ENCODE measurements at regions of chrX and their contacts with region 1.

Region 1: GRCh38 chrX:115330498-115331168 is 41.1 kb downstream of the LUZP4 start:
- DNase-seq: no peak
- H3K4me3 ChIP-seq: peak overlapping the region; percentile 19 to 39
- H3K27ac ChIP-seq: peak overlapping the region; percentile 56 to 62
- H3K4me1 ChIP-seq: no peaks in the 10 kb centered on the region
- H3K27me3 ChIP-seq: no peaks in the 10 kb centered on the region
- CTCF ChIP-seq: peak; percentile 68 to 85 (median 79)

Region 2: DNA sequence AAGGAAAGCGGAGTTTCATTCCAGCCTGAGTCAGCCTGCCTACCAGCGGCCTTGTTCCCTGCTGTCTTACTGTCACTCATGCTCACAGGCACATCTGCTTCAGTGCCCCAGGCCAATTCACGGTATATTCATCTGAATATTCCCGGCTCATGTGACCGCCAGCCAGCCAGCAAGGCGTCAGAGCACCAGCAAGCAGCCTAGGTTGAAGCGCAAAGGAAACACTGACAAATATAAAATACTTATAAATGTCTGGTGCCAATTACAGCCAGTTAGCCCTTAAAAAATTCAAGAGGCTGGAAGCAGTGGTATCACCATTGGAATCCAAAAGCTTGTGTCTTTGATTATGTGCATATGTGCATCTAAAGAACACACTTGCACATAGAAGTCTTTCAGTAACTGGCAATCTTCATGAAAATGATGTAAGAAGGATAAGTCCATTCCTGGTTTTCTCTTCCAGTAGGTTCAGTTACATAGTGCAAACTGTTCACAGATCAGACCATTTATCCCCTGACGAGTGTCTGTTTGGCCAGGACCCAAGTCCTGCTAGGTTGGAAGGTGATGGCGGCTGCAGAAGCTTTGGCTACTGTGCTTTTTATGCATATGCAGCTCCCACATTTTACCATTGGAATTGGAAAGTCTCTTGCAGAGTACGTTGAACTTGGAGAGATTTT is 20.2 kb after region 1 on chrX:
- intact Hi-C with region 1: no loop called
- DNase-seq: no peak
- H3K4me3 ChIP-seq: no peak overlapping the region
- H3K27ac ChIP-seq: peak overlapping the region; percentile 4 to 41
- H3K4me1 ChIP-seq: peaks cover 0 to 3% of the 10 kb centered on the region in 2 donors
- H3K27me3 ChIP-seq: no peaks in the 10 kb centered on the region
- CTCF ChIP-seq: no peak

Region 3: DNA sequence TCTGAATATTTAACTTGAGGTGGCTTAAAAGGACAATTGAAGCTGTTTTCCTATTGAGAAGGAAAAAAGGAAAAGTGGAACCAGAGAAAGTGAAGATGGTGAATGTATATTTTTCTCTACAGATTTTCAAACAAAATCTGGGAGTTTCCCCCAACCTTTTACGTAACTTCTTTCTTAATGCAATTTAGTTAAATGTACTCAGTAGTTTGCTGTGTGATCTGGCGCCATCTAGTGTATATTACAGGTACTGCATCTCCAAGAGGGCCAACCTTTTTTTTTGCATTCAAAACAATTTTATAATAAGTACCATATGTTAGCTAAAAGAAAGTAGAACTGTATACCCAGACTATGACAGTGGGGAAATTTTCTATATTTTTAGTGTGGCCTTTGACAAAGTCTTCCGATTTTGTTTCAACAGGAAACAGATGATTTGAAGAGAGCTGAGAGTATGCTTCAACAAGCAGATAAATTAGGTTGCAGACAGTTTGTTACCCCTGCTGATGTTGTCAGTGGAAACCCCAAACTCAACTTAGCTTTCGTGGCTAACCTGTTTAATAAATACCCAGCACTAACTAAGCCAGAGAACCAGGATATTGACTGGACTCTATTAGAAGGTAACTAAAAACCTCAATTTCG is 312.4 kb after region 1 on chrX:
- intact Hi-C with region 1: loop called (anchors 2 kb)
- DNase-seq: no peak
- H3K4me3 ChIP-seq: no peak overlapping the region
- H3K27ac ChIP-seq: peak overlapping the region in 1 of 2 donors; percentile 35
- H3K4me1 ChIP-seq: peaks cover 0 to 6% of the 10 kb centered on the region in 2 donors
- H3K27me3 ChIP-seq: no peaks in the 10 kb centered on the region
- CTCF ChIP-seq: peak; percentile 84 to 98 (median 98)

Region 4: GRCh38 chrX:115679460-115679859 is 348.8 kb after region 1 on chrX:
- intact Hi-C with region 1: loop called (anchors 1 kb)
- DNase-seq: no peak
- H3K4me3 ChIP-seq: peak overlapping the region in 1 of 2 donors; percentile 17
- H3K27ac ChIP-seq: peak overlapping the region in 1 of 2 donors; percentile 41
- H3K4me1 ChIP-seq: no peaks in the 10 kb centered on the region
- H3K27me3 ChIP-seq: no peaks in the 10 kb centered on the region
- CTCF ChIP-seq: peak; percentile 19 to 56 (median 28)

Region 5: DNA sequence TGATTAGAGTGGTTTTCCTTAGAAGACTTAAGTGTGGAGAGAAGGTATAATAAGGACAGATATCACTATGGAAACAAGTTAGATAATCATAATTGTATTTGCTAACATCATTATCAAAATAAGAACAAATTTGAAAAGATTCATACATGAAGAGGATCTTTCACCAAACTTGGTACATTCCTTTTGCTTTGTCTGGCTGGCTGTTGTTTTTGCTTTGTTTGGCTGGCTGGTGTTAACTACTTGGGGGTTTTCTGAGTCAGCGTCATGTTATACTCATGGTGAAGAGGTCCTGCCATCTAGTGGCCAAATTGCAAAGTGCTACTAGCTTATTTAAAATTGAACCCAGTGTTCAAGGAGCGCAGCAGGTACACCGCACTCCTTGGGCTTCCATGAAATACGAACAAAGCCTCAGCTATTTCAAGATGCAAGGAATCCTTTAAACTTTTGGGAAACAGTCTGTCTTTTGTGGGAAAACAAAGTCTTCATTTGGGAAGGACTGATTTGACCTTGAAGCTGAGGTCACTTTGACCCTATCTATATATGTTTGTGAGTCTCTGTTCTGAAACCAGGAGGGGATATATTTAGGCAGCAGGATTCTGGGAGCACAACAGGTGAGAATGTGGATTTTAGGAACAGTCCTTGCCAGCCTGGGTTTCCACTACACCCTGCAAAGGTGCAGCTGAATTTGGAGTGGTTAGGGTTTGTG is 360.0 kb after region 1 on chrX:
- intact Hi-C with region 1: loop called (anchors 5 kb)
- DNase-seq: peak in 1 of 2 donors; percentile 86
- H3K4me3 ChIP-seq: peak overlapping the region in 1 of 2 donors; percentile 41
- H3K27ac ChIP-seq: peak overlapping the region; percentile 59 to 78
- H3K4me1 ChIP-seq: no peaks in the 10 kb centered on the region
- H3K27me3 ChIP-seq: no peaks in the 10 kb centered on the region
- CTCF ChIP-seq: peak; percentile 58 to 86 (median 78)